Sigmoid colon (tissue), 7 donors: ENCODE measurements at regions of chr15 and their contacts with region 1.

Region 1: GRCh38 chr15:40957581-40958051 is 4.3 kb downstream of the CHAC1 start:
- DNase-seq: peak; percentile 96
- H3K4me3 ChIP-seq: no peak overlapping the region
- H3K27ac ChIP-seq: peak overlapping the region; percentile 44 to 91 (median 82)
- H3K4me1 ChIP-seq: peaks cover 0 to 46% (median 31%) of the 10 kb centered on the region in 4 donors
- H3K27me3 ChIP-seq: no peaks in the 10 kb centered on the region
- CTCF ChIP-seq: no peak
- EP300 ChIP-seq: peak in 2 of 4 donors; percentile 36 to 59
- POLR2A ChIP-seq: no peak

Region 2: GRCh38 chr15:40893733-40894688 is 63.6 kb before region 1 on chr15 and contains the start of gene VPS18:
- intact Hi-C with region 1: no loop called
- DNase-seq: peak; percentile 99
- H3K4me3 ChIP-seq: peak within 1 kb of the TSS; percentile 56 to 84 (median 82)
- H3K27ac ChIP-seq: peak within 1 kb of the TSS; percentile 87 to 96 (median 92)
- H3K4me1 ChIP-seq: peaks cover 0 to 20% (median 20%) of the 10 kb centered on the region in 4 donors
- H3K27me3 ChIP-seq: no peaks in the 10 kb centered on the region
- CTCF ChIP-seq: peak; percentile 94 to 99 (median 96)
- EP300 ChIP-seq: peak in 2 of 4 donors; percentile 28 to 93
- POLR2A ChIP-seq: peak; percentile 74 to 85
- total RNA-seq, gene VPS18: 17.4 to 19.6 (median 19.0) TPM

Region 3: DNA sequence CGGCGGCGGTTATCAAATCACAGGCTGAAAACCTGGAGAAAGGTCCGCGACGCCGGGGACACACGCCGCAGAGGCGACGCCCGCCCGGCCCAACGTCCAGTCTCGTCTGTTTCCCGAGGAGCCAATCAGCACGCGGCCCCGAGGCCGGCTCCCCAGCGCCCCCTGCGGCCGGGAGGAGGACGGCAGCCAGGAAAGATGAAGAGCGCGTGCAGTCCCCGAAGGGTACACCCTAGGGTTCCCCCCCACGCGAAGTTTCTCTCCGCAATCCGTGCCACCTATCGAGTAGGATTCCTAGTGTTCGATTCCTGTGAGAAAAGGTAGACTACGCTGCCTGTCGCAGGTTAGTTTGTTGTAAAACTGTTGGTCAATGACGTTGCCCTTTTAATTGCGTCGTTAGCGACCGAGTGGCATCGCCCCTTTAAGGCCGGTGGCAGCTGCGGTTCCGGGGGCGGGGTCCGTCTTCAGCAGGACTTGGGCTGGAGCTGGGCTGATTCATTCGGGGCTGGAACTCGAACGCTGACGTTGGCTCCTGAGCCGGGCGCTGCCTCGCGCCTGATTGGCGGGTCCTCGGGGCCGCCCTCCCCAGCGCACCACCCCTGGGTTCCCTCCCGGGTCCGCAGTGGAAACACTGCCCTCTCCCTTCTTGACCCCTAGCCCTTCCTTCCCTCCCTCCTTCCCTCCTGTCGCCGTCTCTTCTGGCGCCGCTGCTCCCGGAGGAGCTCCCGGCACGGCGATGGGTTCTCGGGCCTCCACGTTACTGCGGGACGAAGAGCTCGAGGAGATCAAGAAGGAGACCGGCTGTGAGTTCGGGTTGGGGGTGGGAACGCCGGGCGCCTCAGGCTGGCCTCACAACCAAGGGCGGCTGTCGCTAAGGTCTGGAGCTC is 273.3 kb after region 1 on chr15 and contains the starts of genes CHP1 and EXD1:
- intact Hi-C with region 1: loop called (anchors 5 kb)
- DNase-seq: peak; percentile 99
- H3K4me3 ChIP-seq: peak within 1 kb of the TSS; percentile 75 to 78 (median 78)
- H3K27ac ChIP-seq: peak within 1 kb of the TSS; percentile 91 to 93 (median 91)
- H3K4me1 ChIP-seq: peaks cover 0 to 32% (median 30%) of the 10 kb centered on the region in 4 donors
- H3K27me3 ChIP-seq: no peaks in the 10 kb centered on the region
- CTCF ChIP-seq: peak; percentile 90 to 98 (median 96)
- EP300 ChIP-seq: peak in 2 of 4 donors; percentile 6 to 37
- POLR2A ChIP-seq: peak; percentile 85 to 86
- total RNA-seq, gene CHP1: 101 to 118 (median 105) TPM
- total RNA-seq, gene EXD1: not detected

Region 4: GRCh38 chr15:41309226-41309905 is 351.8 kb after region 1 on chr15:
- intact Hi-C with region 1: no loop called
- DNase-seq: no peak
- H3K4me3 ChIP-seq: no peak overlapping the region
- H3K27ac ChIP-seq: no peak overlapping the region
- H3K4me1 ChIP-seq: no peaks in the 10 kb centered on the region
- H3K27me3 ChIP-seq: no peaks in the 10 kb centered on the region
- CTCF ChIP-seq: no peak
- EP300 ChIP-seq: no peak
- POLR2A ChIP-seq: no peak